ENCODE measurements at regions of chr5 and their contacts with region 1.

Region 1: DNA sequence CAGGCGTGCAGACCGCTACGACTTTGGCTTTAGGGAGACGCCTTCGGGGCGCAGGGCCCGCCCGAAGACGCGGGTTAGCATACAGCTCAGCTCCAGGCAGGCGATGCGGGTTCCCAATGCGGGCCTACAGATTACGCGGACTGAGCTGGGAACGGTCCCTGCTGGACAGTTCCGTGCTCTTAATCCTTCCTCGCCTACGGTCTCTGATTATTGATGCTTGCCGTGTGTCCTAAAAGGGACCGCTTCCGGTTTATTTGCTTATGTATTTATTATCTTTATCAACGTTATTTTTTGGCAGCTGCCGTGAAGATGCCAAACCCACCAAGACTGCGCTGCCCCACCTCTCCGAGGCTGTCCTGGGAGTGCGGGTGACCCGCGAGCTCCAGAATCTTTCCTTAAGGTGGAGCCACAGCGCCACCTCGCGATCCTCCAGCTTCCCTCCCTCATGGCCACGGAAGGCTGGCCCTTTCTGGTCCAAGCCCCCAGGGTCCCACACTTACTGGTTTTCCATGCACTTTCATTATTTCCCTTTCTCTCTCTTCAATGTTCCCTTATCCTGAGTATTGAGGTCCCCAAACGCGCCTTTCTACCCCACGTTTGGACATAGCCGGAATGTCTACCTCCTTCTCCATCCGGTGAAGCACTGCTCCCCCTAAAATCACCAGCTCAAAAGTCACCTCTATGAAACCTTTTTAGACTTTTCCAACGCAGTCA is 7.0 kb upstream of the EBF1 start:
- DNase-seq: peak; percentile 72 to 80 (median 80)
- H3K4me3 ChIP-seq: peak overlapping the region in 6 of 7 experiments; percentile 35 to 64 (median 47)
- H3K27ac ChIP-seq: no peak overlapping the region
- H3K4me1 ChIP-seq: peaks cover 0 to 27% (median 22%) of the 10 kb centered on the region in 4 experiments
- H3K27me3 ChIP-seq: peaks cover 14 to 89% (median 61%) of the 10 kb centered on the region in 5 experiments

Region 2: DNA sequence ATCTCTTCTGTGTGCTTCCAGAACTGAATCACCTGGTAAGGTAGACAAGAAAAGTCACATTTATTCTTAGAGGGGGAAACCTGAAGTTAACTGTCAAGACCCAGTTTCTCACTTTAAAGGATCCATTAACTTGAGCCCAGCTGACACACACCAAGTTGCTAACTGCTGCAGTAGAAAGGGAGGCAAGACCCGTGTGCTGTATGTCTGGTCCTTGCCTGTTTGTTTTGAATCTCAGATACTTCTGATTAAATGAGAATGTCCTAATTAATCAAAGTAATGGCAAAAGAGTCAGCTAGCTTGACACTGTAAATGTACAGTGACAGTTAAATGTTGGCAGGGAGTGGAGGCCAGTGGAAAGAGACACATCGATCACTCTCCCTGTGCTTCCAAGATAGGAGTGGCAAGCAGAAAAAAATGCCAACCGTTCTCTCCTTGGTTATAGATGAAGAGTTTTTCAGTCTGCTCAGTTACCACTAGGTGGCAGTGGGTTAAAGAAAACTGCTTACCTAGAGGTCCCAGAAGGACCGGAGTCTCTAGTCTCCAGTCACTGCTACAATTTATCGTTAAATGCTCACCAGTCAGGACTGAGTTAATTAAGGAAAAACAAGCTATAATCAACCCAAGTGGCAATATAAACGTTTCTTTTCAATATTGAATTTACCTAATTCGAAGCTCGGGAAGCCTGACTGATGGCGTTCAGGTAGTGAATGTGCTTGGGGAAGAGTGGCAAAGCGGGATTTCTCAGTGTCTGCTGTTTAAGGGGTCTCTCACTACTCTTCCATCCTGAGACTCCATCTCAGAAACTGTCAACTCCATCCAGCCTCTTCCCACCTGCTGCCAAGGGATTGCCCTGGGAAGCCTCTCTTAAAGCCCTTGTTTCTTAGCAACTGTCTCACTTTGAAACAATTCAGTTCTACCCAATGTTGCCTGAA is 1344.8 kb before region 1 on chr5:
- CTCF ChIA-PET with region 1: interaction called, 11 read pairs
- POLR2A ChIA-PET with region 1: no interaction called
- DNase-seq: peak; percentile 63 to 72 (median 69)
- H3K4me3 ChIP-seq: no peak overlapping the region
- H3K27ac ChIP-seq: no peak overlapping the region
- H3K4me1 ChIP-seq: peaks cover 0 to 3% (median 0%) of the 10 kb centered on the region in 4 experiments
- H3K27me3 ChIP-seq: no peaks in the 10 kb centered on the region

Region 3: DNA sequence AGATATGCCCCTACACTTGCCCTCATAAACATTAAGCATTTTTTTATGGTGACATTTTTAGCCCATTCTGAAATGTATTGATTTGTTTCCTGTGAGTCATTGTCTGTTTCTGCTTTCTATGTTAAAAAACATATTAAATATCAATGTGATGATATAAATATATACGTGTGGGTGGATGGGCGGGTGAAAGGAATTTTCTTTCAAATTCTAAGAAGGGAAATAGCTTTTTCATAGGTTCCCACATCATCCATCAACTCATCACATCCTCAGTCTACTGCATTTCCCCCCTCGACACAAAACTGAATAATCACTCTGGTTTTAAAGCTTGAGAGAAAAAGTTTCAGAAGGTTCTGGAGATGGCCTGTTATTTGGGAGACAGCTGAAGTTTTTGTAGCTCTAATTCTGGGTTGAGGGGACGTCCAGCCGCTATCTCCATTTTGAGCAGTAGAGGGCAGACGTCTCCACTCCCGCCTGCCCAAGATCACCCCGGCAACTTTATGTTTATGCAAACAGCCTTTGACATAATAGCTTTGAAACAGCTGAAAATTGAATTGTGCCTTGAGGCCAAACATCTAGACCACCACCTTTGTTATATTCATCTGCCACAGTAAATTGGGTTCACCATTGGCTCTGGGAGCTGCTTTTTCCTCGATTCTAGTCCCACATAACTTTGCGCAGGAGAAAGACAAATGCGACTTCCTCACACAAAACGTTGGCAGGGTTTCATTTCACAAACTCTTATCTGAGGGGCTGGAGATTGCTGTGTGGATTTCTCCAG is 1031.5 kb before region 1 on chr5:
- CTCF ChIA-PET with region 1: interaction called, 12 read pairs
- POLR2A ChIA-PET with region 1: no interaction called
- DNase-seq: peak; percentile 71 to 87 (median 86)
- H3K4me3 ChIP-seq: peak overlapping the region in 4 of 7 experiments; percentile 27 to 63 (median 46)
- H3K27ac ChIP-seq: peak overlapping the region in 1 of 2 experiments; percentile 37
- H3K4me1 ChIP-seq: peaks cover 0 to 3% (median under 1%) of the 10 kb centered on the region in 4 experiments
- H3K27me3 ChIP-seq: peaks cover 0 to 2% (median 0%) of the 10 kb centered on the region in 5 experiments

Region 4: DNA sequence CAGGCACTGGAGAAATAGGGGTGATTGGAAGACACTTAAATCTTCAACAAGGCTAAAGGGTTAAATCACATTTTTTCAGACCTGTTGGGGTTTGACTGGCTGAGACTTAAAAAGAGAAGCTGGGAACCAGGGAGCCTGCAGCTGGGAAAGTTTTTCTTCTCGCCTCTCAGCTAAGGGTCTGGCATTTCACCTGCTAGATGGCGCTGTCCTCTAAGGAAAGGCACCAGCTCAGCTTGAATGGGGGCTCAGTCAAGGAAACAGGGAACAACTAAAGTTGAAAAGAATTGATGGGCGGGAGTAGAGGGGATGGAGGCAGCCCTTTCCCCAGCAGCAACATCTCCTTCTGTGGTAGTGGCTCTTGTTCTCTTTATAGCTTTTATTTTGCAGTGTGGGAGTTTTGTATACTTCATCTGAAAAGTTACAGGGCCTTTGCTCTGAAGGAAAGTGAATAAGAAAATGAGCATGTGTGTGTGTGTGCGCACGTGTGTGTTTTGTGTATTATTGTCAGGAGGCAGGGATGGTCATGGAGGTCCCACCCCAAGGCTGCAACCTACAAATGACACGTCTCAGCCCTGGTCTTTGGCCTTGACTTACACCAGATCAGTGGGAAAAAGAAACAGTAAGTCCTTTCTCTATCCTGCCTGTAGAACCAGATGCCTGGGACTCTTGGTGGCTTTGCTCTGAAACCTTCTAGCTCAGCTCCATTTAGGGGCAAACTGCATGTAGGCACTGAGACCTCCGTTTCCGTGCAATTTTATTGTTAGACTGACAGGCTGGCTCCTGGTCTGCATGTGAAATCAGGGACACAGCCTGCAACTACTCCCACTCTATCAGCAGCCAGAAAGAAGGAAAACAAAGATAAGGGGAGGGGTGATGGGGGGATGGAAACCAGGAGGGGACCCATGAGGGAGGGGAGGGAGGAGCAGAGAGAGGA is 931.5 kb before region 1 on chr5:
- CTCF ChIA-PET with region 1: interaction called, 42 read pairs
- POLR2A ChIA-PET with region 1: no interaction called
- DNase-seq: peak; percentile 68 to 76 (median 72)
- H3K4me3 ChIP-seq: no peak overlapping the region
- H3K27ac ChIP-seq: no peak overlapping the region
- H3K4me1 ChIP-seq: no peaks in the 10 kb centered on the region
- H3K27me3 ChIP-seq: peaks cover 0 to 4% (median 3%) of the 10 kb centered on the region in 5 experiments

Region 5: GRCh38 chr5:159083548-159084452 is 22.9 kb before region 1 on chr5:
- CTCF ChIA-PET with region 1: no interaction called
- POLR2A ChIA-PET with region 1: no interaction called
- DNase-seq: no peak
- H3K4me3 ChIP-seq: no peak overlapping the region
- H3K27ac ChIP-seq: no peak overlapping the region
- H3K4me1 ChIP-seq: no peaks in the 10 kb centered on the region
- H3K27me3 ChIP-seq: peaks cover 0 to 5% (median 0%) of the 10 kb centered on the region in 5 experiments